ENCODE measurements at regions of chr9 and their contacts with region 1.

Region 1: DNA sequence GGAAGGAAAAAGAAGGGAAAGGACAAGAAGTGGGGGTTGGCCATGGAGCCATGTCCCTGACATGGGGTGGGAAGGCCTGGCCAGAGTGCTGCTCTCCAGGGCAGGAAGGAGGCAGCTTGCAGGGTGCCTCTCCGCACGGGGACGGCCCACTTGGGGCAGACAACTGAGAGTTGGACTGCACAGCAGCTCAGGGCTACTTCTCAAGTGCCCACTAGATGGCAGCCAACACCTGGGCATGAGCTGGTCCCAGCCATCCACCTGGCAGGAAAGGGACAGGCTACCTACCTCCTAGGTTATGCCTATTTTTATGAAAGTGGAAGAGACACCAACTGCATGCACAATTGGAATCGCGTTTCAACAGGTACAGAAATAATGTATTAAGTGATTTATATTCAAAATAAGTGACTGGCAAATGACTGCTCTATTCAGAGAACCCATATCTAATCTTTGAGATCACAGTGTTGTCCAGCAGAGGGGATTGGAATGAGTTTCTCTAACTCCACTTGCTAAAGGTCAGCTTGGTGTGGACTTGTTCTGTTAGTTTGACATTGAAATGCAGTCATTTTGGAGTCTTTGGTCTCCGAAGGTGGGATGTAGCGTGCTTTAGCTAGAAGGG is 113.4 kb downstream of the SYK start:
- DNase-seq: peak; percentile 74
- H3K4me3 ChIP-seq: no peak overlapping the region
- H3K27ac ChIP-seq: no peak overlapping the region
- H3K4me1 ChIP-seq: peaks cover under 1% of the 10 kb centered on the region
- H3K27me3 ChIP-seq: no peaks in the 10 kb centered on the region
- CTCF ChIP-seq: peak; percentile 80 to 90

Region 2: DNA sequence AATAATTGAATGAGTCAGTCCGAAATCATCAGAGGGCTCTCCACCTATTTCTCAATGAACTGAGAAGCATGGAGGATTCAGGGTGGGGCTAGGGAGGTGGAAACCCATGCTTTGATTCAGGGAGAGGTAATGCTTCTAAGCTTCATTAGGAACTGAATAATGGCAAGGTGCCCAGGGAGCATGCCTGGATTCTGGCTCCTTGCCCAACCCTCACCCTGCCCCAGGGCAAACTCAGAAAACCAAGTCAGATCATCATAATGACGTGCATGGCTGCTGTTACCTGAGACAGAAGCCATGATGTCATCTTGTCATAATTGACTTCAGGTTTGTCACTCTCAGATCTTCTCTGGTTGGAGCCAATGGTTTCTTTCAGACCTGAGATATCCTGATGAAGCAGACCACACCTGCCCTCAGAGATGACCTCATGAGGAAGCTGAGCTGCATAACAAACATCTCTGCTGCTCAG is 86.2 kb after region 1 on chr9:
- CTCF ChIA-PET with region 1: no interaction called
- dilution Hi-C with region 1: no loop called
- in situ Hi-C with region 1: no loop called
- intact Hi-C with region 1: loop called (anchors 1 kb)
- DNase-seq: peak; percentile 100
- H3K4me3 ChIP-seq: no peak overlapping the region
- H3K27ac ChIP-seq: peak overlapping the region; percentile 96
- H3K4me1 ChIP-seq: peaks cover 36% of the 10 kb centered on the region
- H3K27me3 ChIP-seq: no peaks in the 10 kb centered on the region
- CTCF ChIP-seq: no peak

Region 3: DNA sequence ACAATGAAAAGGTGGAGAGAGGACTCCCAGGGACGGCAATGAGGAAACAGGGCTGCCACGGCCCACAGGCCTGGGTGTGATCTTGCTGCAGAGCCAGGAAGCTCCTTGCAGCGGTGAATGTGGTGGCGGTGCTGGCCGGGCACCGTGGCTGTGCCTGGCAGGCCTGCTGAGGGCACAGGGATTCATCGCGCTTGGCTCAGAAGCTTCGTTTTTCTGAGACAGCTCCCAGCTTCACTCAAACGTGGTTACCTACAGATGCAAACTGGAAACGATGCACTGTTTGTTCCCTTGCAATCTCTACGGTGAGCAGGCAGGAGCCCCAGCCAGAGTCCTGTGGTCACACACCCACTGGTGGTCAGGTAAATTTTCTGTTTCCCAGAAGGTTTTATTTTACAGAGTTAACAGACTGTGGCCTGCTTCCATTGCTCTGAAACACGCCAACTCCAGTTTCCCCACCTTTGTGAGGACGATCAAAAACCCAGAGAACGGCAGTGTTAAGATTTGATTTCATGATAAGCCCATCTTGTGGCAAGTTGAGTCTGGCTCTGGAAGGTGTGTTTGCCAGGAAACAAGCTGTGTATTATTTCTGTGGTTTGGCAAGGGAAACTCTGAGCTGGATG is 262.8 kb after region 1 on chr9:
- CTCF ChIA-PET with region 1: no interaction called
- dilution Hi-C with region 1: no loop called
- in situ Hi-C with region 1: no loop called
- intact Hi-C with region 1: loop called (anchors 5 kb)
- DNase-seq: peak; percentile 96
- H3K4me3 ChIP-seq: no peak overlapping the region
- H3K27ac ChIP-seq: peak overlapping the region; percentile 78
- H3K4me1 ChIP-seq: peaks cover 46% of the 10 kb centered on the region
- H3K27me3 ChIP-seq: no peaks in the 10 kb centered on the region
- CTCF ChIP-seq: no peak

Region 4: DNA sequence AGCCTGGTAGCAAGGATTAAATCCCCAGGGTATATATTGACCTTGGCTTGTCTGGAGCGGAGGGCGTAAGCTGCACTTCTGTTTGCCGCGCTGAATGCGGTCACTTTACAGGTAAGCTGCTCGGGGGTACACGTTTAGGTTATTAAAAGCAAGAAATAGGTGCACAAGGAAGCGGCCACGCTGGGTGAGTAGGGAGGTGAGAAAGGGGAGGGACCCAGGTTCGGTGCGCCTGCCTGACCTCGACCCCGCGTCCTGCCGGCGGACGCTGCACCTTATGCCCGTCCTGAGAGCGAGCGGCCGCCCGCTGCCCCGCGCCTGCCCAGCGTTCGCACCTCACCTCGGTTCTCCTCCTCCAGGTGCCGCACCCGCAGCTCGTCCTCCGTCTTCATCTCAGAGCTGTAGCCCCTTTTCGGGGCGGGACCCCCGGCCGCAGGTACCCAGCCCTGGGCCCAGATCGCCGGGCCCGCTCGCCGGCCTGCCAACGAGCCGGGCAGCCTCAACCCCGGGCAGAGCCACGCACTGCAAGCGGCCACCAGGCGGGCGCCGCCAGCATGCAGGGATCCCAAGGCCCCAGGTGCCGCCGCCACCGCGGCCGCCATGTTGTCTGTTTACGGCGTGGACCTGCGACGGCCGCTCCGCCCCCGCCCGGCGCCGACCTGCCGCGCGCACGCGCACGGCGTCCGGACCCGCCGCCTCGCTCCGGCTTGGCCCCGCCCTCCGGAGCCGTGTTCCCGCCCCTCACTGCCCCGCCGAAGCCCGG is 446.5 kb after region 1 on chr9 and contains the start of gene AUH:
- CTCF ChIA-PET with region 1: no interaction called
- dilution Hi-C with region 1: no loop called
- in situ Hi-C with region 1: no loop called
- intact Hi-C with region 1: loop called (anchors 1 kb)
- DNase-seq: peak; percentile 65
- H3K4me3 ChIP-seq: peak within 1 kb of the TSS; percentile 70 to 99 (median 96)
- H3K27ac ChIP-seq: peak within 1 kb of the TSS; percentile 71
- H3K4me1 ChIP-seq: peaks cover 14% of the 10 kb centered on the region
- H3K27me3 ChIP-seq: no peaks in the 10 kb centered on the region
- CTCF ChIP-seq: no peak
- total RNA-seq, gene AUH: 10.9 to 11.5 TPM

Region 5: GRCh38 chr9:91681461-91682305 is 766.7 kb after region 1 on chr9:
- CTCF ChIA-PET with region 1: no interaction called
- dilution Hi-C with region 1: no loop called
- in situ Hi-C with region 1: no loop called
- intact Hi-C with region 1: loop called (anchors 2 kb)
- DNase-seq: peak; percentile 46
- H3K4me3 ChIP-seq: no peak overlapping the region
- H3K27ac ChIP-seq: no peak overlapping the region
- H3K4me1 ChIP-seq: no peaks in the 10 kb centered on the region
- H3K27me3 ChIP-seq: no peaks in the 10 kb centered on the region
- CTCF ChIP-seq: peak; percentile 62 to 91

Region 6: GRCh38 chr9:91727316-91727861 is 812.4 kb after region 1 on chr9:
- CTCF ChIA-PET with region 1: no interaction called
- dilution Hi-C with region 1: no loop called
- in situ Hi-C with region 1: loop called (anchors 10 to 25 kb)
- intact Hi-C with region 1: loop called (anchors 1 kb)
- DNase-seq: peak; percentile 39
- H3K4me3 ChIP-seq: no peak overlapping the region
- H3K27ac ChIP-seq: no peak overlapping the region
- H3K4me1 ChIP-seq: no peaks in the 10 kb centered on the region
- H3K27me3 ChIP-seq: no peaks in the 10 kb centered on the region
- CTCF ChIP-seq: peak; percentile 71 to 77